ENCODE measurements at regions of chr7 and their contacts with region 1.

Region 1: DNA sequence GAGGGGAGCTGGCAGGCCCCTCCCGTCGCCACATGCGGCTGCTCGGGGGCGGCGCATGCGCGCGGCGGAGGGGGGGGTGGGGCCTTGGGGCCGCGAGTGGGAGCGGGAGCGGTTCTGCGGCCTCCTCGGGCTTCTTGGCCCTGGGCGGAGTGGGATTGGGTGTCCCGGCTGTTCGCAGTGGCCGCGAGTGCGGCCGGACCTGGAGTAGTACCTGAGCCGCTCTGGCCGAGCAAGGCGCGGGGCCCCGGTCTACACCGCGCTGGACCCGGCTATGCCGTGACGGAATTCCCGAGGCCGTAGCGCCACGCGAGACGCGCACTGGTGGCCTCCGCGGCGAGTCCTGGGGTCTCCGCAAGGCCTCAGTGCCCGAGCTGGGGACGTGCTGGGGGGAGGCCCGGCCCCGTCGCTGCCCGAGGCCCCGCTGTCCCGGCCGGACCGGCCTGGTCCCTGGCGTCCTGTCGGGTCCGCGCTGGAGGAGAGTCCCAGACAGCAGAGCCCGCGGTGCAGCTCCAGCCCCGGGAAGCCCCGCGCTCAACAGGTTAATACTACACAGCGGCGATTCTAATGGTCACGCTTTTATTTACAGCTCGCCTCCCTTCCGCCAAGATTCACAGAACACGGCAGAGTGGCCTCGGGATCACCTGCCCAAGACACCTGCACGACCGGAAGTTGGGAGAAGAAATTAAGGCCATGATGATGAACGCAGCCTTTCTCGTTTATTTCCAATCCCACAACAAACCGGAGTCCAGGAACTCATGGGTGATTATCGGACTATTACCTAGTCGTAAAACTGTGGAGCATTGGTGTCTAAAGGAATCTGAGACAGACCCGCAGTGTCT is 671 bp upstream of the PAXIP1 start:
- DNase-seq: peak; percentile 64
- H3K4me3 ChIP-seq: peak overlapping the region; percentile 95 to 97
- H3K27ac ChIP-seq: peak overlapping the region; percentile 93 to 95
- H3K4me1 ChIP-seq: no peaks in the 10 kb centered on the region
- H3K27me3 ChIP-seq: no peaks in the 10 kb centered on the region
- CTCF ChIP-seq: peak in 1 of 4 experiments; percentile 0
- POLR2A ChIP-seq: peak; percentile 34

Region 2: GRCh38 chr7:155069992-155070751 is 66.6 kb after region 1 on chr7 and contains the start of gene HTR5A:
- intact Hi-C with region 1: loop called (anchors 10 kb)
- DNase-seq: peak; percentile 61
- H3K4me3 ChIP-seq: no peak within 1 kb of the TSS
- H3K27ac ChIP-seq: no peak within 1 kb of the TSS
- H3K4me1 ChIP-seq: no peaks in the 10 kb centered on the region
- H3K27me3 ChIP-seq: no peaks in the 10 kb centered on the region
- CTCF ChIP-seq: no peak
- POLR2A ChIP-seq: no peak
- total RNA-seq, gene HTR5A: not detected

Region 3: DNA sequence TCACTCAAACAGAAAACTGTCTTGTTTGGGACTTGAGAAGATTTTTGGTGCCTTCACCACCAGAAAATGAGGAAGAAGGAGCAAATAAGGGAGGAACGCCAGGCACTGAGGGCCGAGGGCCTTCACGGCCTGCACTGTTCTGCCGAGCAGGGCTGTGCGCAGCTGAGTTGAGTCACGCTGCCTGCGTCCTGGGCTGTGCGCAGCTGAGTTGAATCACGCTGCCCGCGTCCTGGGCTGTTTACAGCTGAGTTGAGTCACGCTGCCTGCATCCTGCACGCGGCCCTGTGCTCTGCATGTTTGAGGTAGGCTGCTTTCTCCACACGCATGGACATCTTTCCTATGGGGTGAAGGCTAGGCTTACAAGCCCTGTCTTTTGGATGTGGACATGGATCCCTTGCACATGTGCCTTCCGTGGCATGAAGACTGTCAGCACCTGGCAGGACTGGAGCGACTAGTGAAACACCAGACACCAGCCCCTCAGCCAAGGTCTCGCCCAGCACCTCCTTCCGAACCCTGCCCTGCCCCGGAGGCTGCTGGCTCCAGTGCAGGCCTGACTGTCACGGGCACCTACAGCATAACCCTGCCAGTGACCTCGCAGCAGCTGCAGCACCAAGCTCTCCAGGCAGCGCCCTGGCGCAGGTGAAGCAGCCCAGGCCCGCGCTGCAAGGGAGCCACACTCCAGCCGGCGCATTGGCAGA is 163.2 kb after region 1 on chr7:
- intact Hi-C with region 1: loop called (anchors 10 kb)
- DNase-seq: no peak
- H3K4me3 ChIP-seq: no peak overlapping the region
- H3K27ac ChIP-seq: peak overlapping the region in 1 of 2 donors; percentile 61
- H3K4me1 ChIP-seq: no peaks in the 10 kb centered on the region
- H3K27me3 ChIP-seq: no peaks in the 10 kb centered on the region
- CTCF ChIP-seq: no peak
- POLR2A ChIP-seq: no peak

Region 4: DNA sequence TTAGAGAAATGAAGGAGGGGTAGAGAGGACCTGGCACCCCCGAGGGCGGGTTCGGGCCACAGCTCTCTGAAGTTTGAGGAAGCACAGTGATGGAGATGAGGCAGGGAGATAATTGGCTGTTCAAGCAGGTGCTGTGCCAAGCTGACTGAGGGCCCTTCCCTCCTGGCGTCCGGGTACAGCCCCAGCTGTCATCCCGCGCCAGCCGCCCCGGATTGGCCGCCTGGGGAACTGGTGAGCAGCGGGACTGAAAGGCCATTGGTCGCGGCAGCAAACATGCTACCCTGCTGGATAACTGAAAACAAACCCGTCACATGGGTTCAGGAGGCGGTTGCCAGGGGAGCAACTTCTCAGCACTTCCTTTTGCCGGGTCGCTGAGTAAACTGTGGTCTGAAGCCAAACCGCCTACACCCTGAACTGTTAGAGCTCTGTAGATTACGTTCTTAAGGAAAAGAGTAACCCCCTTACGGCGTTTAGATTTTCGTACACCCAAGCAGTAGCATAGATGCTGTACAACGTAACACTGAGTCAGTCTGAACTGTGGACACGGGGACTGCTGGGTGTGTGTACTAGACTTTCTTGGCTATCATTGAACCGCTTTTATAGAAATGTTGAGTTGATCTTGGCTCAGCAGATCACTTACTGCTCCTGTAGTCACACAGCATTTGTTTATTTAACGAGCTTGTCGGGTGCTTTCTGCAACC is 295.4 kb after region 1 on chr7:
- intact Hi-C with region 1: loop called (anchors 2 kb)
- DNase-seq: peak; percentile 95
- H3K4me3 ChIP-seq: peak overlapping the region; percentile 82 to 95
- H3K27ac ChIP-seq: peak overlapping the region; percentile 93 to 97
- H3K4me1 ChIP-seq: peaks cover 6% of the 10 kb centered on the region
- H3K27me3 ChIP-seq: no peaks in the 10 kb centered on the region
- CTCF ChIP-seq: peak in 1 of 4 experiments; percentile 45
- POLR2A ChIP-seq: peak; percentile 62

Region 5: GRCh38 chr7:155858521-155859061 is 855.0 kb after region 1 on chr7:
- intact Hi-C with region 1: no loop called
- DNase-seq: no peak
- H3K4me3 ChIP-seq: no peak overlapping the region
- H3K27ac ChIP-seq: no peak overlapping the region
- H3K4me1 ChIP-seq: no peaks in the 10 kb centered on the region
- H3K27me3 ChIP-seq: peaks cover 3% of the 10 kb centered on the region
- CTCF ChIP-seq: no peak
- POLR2A ChIP-seq: no peak